Gastrocnemius medialis (tissue), 4 donors: ENCODE measurements at regions of chr2 and their contacts with region 1.

Region 1: DNA sequence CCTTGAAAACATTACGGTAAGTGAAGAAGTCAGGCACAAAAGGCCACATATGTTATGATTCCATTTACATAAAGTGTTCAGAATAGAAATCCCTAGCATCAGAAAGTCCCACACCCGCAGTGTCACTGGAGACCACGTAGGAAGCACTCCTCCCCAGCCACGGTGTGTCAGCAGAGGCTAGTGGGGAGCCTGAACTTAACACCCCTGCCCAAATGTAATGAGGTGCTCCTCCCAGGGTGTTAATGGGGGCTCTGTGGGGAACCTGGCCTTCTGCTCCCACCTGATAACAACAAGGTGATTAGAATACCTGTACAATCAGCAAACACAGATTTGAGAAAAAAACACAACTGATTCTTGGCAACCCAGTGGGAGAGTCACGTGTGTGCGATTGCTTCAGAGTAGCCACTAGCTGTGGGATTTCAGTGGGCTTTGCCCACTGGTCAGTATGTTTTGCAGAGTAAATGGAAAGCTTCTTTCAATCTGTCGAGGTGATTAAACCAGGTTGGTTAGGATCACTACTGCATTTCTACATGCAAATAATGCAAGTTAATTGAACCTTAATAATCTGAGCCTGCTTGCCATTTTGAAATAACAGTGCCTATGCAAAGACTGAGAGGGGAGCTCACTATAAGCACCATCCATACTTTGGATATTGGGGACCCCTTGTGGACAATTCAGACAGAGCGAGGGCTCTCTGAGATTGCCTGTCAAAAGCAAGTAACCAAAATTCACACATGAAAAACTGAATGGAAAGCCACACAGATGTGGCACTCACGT is 20.6 kb upstream of the ATRAID start:
- DNase-seq: peak in 1 of 2 donors; percentile 36
- ATAC-seq: peak; percentile 80 to 82
- H3K4me3 ChIP-seq: no peak overlapping the region
- H3K27ac ChIP-seq: no peak overlapping the region
- H3K4me1 ChIP-seq: peaks cover under 1 to 15% of the 10 kb centered on the region in 2 donors
- H3K27me3 ChIP-seq: no peaks in the 10 kb centered on the region
- CTCF ChIP-seq: peak; percentile 43 to 74 (median 66)
- POLR2A ChIP-seq: no peak

Region 2: DNA sequence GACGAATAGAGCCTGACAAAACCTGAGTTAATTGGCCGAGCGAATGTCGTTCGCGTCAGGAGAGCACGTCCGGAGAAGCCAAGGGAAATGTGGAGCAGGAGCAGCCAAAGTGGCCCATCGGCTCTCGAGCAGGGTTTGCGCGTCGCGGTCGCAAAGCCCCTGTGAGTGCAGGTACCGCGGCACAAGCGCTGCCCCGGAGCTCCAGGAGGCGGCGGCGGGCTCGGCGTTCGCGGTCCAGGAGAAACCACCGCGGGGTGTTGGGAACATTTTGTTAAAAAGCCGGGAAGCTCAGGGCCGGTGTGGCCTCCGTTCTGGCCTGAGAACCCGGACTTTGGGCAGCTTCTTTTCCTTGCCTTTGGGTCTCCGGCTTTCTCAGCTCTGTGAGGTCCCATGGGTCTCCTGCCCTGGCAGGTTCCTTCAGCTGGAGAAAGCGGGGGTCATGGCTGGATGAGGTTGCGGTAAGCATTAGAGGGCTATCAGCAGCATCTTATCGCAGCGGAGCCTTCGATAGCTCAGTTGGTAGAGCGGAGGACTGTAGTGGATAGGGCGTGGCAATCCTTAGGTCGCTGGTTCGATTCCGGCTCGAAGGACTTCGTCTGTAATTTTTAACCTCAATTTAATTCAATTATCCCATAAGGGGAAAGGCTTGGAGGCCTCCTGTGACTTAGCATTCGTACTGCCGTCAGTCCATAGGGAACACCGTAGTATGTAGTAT is 140.8 kb before region 1 on chr2:
- in situ Hi-C with region 1: no loop called
- intact Hi-C with region 1: no loop called
- DNase-seq: peak; percentile 81 to 91
- ATAC-seq: peak; percentile 80 to 83
- H3K4me3 ChIP-seq: peak overlapping the region; percentile 78 to 92 (median 84)
- H3K27ac ChIP-seq: peak overlapping the region; percentile 93 to 96 (median 93)
- H3K4me1 ChIP-seq: peaks cover 11 to 13% of the 10 kb centered on the region in 2 donors
- H3K27me3 ChIP-seq: no peaks in the 10 kb centered on the region
- CTCF ChIP-seq: peak; percentile 61 to 73 (median 67)
- POLR2A ChIP-seq: peak in 1 of 2 donors; percentile 9

Region 3: GRCh38 chr2:27095745-27096651 is 95.2 kb before region 1 on chr2:
- in situ Hi-C with region 1: loop called in 3 of 4 experiments (anchors 5 to 10 kb)
- intact Hi-C with region 1: loop called (anchors 1 kb)
- DNase-seq: peak; percentile 50 to 72
- ATAC-seq: peak; percentile 86 to 93
- H3K4me3 ChIP-seq: peak overlapping the region; percentile 41 to 59 (median 54)
- H3K27ac ChIP-seq: peak overlapping the region; percentile 69 to 78 (median 71)
- H3K4me1 ChIP-seq: peaks cover 5 to 8% of the 10 kb centered on the region in 2 donors
- H3K27me3 ChIP-seq: no peaks in the 10 kb centered on the region
- CTCF ChIP-seq: no peak
- POLR2A ChIP-seq: no peak

Region 4: DNA sequence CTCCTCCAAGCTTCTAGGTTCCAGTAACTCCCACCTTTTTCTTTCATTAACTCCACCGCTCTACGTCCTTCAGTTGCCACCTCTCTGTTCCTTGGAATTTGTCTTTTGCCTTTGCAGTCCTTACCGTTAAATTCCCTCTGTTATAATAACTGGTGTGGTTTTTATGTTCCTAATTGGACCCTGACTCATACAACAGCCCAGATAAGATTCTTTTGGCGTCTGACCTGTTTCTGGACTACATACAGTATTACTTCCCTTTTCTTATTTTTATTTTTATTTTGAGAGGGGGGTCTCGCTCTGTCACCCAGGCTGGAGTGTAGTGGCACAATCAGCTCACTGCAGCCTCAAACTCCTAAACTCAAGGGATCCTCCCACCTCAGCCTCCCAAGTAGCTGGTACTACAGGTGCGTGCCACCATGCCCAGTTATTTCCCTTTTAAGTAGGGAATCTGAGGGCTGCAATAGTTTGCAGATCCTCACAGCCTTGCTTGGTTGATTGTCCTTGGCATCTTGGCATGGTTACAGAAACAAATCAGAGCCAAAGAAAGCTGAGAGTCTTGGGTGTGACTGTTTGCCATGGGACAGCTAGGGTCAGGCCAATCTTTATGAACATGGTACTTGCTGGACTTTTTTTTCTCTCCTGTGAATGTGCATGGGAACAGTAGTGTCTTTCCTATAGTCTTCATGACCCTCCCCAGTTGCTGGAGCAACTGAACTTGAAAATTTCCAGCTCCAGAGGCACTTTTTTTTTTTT is 20.5 kb before region 1 on chr2:
- in situ Hi-C with region 1: no loop called
- intact Hi-C with region 1: loop called (anchors 1 kb)
- DNase-seq: peak in 1 of 2 donors; percentile 12
- ATAC-seq: peak; percentile 37 to 81
- H3K4me3 ChIP-seq: no peak overlapping the region
- H3K27ac ChIP-seq: no peak overlapping the region
- H3K4me1 ChIP-seq: peaks cover 5 to 12% of the 10 kb centered on the region in 2 donors
- H3K27me3 ChIP-seq: no peaks in the 10 kb centered on the region
- CTCF ChIP-seq: no peak
- POLR2A ChIP-seq: no peak

Region 5: GRCh38 chr2:27400348-27401135 is 209.3 kb after region 1 on chr2:
- in situ Hi-C with region 1: no loop called
- intact Hi-C with region 1: no loop called
- DNase-seq: no peak
- ATAC-seq: no peak
- H3K4me3 ChIP-seq: no peak overlapping the region
- H3K27ac ChIP-seq: no peak overlapping the region
- H3K4me1 ChIP-seq: no peaks in the 10 kb centered on the region
- H3K27me3 ChIP-seq: no peaks in the 10 kb centered on the region
- CTCF ChIP-seq: no peak
- POLR2A ChIP-seq: no peak